ENCODE measurements at regions of chr2 and their contacts with region 1.

Region 1: GRCh38 chr2:25951071-25951547 is 31.2 kb downstream of the KIF3C start:
- DNase-seq: peak; percentile 88
- H3K4me3 ChIP-seq: no peak overlapping the region
- H3K27ac ChIP-seq: no peak overlapping the region
- H3K4me1 ChIP-seq: no peaks in the 10 kb centered on the region
- H3K27me3 ChIP-seq: no peaks in the 10 kb centered on the region
- CTCF ChIP-seq: peak; percentile 97

Region 2: GRCh38 chr2:26330113-26330549 is 379.0 kb after region 1 on chr2:
- CTCF ChIA-PET with region 1: interaction called, 3 read pairs
- POLR2A ChIA-PET with region 1: no interaction called
- intact Hi-C with region 1: loop called (anchors 1 kb)
- DNase-seq: peak; percentile 79
- H3K4me3 ChIP-seq: no peak overlapping the region
- H3K27ac ChIP-seq: no peak overlapping the region
- H3K4me1 ChIP-seq: peaks cover 4% of the 10 kb centered on the region
- H3K27me3 ChIP-seq: no peaks in the 10 kb centered on the region
- CTCF ChIP-seq: peak; percentile 93

Region 3: DNA sequence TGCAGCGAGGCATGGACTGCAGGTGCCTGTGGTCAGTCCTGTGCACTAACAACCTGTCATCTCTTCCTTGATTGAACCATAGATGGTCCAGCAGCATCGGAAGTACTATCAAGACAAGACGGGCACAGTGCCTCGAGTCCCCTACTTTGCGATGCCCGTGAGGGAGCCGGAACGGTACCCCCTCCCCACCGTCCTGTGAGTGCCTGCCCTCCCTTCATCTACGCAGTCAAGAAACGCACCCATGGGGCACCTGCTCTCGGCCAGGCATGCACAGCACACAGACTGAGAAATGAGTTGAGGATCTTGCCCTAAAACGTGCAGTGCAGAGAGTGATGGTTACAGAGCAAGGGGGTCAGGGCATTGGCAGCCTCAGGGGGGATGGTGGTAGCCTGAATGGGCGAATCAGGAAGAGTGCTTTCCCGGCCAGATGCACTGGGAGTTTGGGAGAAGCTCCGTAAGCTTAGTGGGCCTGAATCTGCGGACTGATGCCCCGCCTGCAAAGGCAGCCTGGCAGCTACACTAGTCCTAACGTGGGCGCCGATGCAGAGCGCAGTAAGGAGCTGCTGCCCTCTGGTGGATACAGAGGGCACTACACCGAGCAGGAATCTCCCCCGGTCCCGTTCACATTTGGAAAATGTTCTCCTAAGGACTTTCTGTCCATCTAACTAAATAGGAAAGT is 626.5 kb after region 1 on chr2:
- CTCF ChIA-PET with region 1: no interaction called
- POLR2A ChIA-PET with region 1: no interaction called
- intact Hi-C with region 1: loop called (anchors 5 kb)
- DNase-seq: peak; percentile 77
- H3K4me3 ChIP-seq: no peak overlapping the region
- H3K27ac ChIP-seq: no peak overlapping the region
- H3K4me1 ChIP-seq: no peaks in the 10 kb centered on the region
- H3K27me3 ChIP-seq: peaks cover under 1% of the 10 kb centered on the region
- CTCF ChIP-seq: peak; percentile 96